HCT116 (cell line): ENCODE measurements at regions of chr2 and their contacts with region 1.

Region 1: GRCh38 chr2:219402665-219403515 is 15.2 kb upstream of the DNPEP start:
- DNase-seq: peak; percentile 79
- ATAC-seq: peak; percentile 91
- H3K4me3 ChIP-seq: no peak overlapping the region
- H3K27ac ChIP-seq: no peak overlapping the region; the same call in 1 of the 2 replicates
- H3K4me1 ChIP-seq: peaks cover 18 to 55% of the 10 kb centered on the region in 2 experiments
- H3K27me3 ChIP-seq: no peaks in the 10 kb centered on the region
- CTCF ChIP-seq: peak; percentile 91 to 98 (median 94)
- POLR2A ChIP-seq: no peak
- RAD21 ChIP-seq: peak; percentile 98

Region 2: GRCh38 chr2:218582076-218582475 is 820.8 kb before region 1 on chr2:
- CTCF ChIA-PET with region 1: no interaction called
- POLR2A ChIA-PET with region 1: no interaction called
- RAD21 ChIA-PET with region 1: no interaction called
- intact Hi-C with region 1: no loop called
- DNase-seq: no peak
- ATAC-seq: no peak
- H3K4me3 ChIP-seq: no peak overlapping the region
- H3K27ac ChIP-seq: no peak overlapping the region
- H3K4me1 ChIP-seq: no peaks in the 10 kb centered on the region
- H3K27me3 ChIP-seq: no peaks in the 10 kb centered on the region
- CTCF ChIP-seq: no peak
- POLR2A ChIP-seq: no peak
- RAD21 ChIP-seq: no peak

Region 3: DNA sequence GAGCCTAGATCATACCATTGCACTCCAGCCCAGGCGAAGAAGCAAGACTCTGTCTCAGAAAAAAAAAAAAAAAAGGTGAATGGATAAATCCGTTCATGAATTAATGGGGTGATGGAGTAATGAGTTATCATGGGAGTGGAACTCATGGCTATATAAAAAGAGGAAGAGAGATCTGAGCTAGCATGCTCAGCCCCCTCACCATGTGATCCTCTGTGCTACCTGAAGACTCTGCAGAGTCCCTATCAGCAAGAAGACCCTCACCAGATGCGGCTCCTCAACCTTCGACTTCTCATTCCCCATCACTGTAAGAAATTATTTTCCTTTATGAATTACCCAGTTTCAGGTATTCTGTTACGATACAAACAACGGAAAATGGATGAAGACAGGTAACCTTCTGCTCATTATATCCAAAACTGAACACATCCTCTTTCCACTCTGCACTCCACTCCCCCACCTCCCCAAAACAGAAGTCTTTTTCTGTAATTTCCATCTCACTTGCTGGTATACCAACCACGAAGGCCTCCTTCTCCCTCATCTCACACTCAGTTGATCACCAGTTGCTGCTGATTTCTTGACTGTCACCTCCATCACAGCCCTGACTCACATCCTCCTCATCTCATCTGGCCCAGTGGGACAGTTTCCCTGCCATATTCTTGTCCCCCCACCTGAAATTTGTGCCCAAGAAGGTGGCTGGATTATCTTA is 216.0 kb before region 1 on chr2:
- CTCF ChIA-PET with region 1: no interaction called
- POLR2A ChIA-PET with region 1: no interaction called
- RAD21 ChIA-PET with region 1: no interaction called
- intact Hi-C with region 1: no loop called
- DNase-seq: no peak
- ATAC-seq: no peak
- H3K4me3 ChIP-seq: no peak overlapping the region
- H3K27ac ChIP-seq: no peak overlapping the region
- H3K4me1 ChIP-seq: no peaks in the 10 kb centered on the region
- H3K27me3 ChIP-seq: no peaks in the 10 kb centered on the region
- CTCF ChIP-seq: no peak
- POLR2A ChIP-seq: no peak
- RAD21 ChIP-seq: no peak

Region 4: GRCh38 chr2:219388127-219388844 is 14.6 kb before region 1 on chr2:
- CTCF ChIA-PET with region 1: interaction called, 15 read pairs
- POLR2A ChIA-PET with region 1: interaction called, 4 read pairs
- RAD21 ChIA-PET with region 1: no interaction called
- intact Hi-C with region 1: no loop called
- DNase-seq: peak; percentile 90
- ATAC-seq: peak; percentile 78
- H3K4me3 ChIP-seq: peak overlapping the region; percentile 31 to 49
- H3K27ac ChIP-seq: peak overlapping the region; percentile 63
- H3K4me1 ChIP-seq: peaks cover 9 to 18% of the 10 kb centered on the region in 2 experiments; a peak in 3 of 4 replicates
- H3K27me3 ChIP-seq: no peaks in the 10 kb centered on the region
- CTCF ChIP-seq: peak; percentile 38 to 64 (median 60); a peak in 4 of 6 replicates
- POLR2A ChIP-seq: no peak
- RAD21 ChIP-seq: no peak

Region 5: DNA sequence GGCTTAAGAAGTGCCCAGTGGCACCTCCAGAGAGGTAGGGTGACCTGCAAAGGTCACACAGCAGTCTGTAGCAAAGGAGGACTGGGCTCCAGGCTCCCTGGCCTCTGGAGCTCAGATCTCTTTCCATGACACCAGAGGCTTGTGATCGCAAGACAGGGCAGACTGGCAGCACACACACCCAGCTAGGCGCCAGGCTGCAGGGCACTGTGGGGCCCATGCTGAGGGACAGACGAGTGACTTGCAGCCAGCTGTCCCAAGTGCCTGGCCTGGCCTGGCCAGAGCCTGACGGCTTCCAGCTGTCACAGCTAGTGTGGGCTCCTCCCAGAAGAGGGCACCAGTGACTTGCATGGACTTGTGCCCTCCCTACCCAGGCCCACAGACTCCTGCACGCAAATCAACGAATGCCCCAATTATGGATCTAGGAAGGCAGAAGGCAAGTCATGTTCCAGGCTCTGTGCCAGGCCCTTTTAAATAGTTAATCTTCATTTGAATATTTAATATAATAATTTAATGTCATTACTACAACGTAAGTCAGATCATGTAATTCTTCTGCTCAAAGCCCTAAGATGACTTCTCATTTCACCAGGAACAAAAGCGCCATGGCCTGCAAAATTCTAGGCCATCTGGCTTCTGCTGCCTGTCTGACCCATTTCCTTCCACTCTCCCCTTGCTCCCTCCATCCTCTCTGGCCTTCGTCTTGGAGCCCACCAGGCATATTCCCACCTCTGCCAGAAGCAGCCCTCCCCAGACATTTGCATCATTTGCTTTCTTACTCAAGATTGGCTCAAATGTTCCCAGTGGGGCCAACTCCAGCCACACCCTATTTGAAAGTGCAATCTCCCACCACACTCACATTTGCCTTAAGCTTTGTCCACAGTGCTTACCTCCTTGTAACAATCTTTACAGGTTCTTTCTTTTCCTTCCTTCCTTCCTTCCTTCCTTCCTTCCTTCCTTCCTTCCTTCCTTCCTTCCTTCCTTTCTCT is 28.0 kb after region 1 on chr2:
- CTCF ChIA-PET with region 1: interaction called, 8 read pairs
- POLR2A ChIA-PET with region 1: interaction called, 4 read pairs
- RAD21 ChIA-PET with region 1: no interaction called
- intact Hi-C with region 1: loop called (anchors 2 kb)
- DNase-seq: no peak
- ATAC-seq: peak; percentile 85
- H3K4me3 ChIP-seq: no peak overlapping the region
- H3K27ac ChIP-seq: no peak overlapping the region
- H3K4me1 ChIP-seq: peaks cover 6 to 32% of the 10 kb centered on the region in 2 experiments
- H3K27me3 ChIP-seq: no peaks in the 10 kb centered on the region
- CTCF ChIP-seq: peak; percentile 10 to 53 (median 29); a peak in 2 of 6 replicates
- POLR2A ChIP-seq: no peak
- RAD21 ChIP-seq: peak; percentile 72

Region 6: DNA sequence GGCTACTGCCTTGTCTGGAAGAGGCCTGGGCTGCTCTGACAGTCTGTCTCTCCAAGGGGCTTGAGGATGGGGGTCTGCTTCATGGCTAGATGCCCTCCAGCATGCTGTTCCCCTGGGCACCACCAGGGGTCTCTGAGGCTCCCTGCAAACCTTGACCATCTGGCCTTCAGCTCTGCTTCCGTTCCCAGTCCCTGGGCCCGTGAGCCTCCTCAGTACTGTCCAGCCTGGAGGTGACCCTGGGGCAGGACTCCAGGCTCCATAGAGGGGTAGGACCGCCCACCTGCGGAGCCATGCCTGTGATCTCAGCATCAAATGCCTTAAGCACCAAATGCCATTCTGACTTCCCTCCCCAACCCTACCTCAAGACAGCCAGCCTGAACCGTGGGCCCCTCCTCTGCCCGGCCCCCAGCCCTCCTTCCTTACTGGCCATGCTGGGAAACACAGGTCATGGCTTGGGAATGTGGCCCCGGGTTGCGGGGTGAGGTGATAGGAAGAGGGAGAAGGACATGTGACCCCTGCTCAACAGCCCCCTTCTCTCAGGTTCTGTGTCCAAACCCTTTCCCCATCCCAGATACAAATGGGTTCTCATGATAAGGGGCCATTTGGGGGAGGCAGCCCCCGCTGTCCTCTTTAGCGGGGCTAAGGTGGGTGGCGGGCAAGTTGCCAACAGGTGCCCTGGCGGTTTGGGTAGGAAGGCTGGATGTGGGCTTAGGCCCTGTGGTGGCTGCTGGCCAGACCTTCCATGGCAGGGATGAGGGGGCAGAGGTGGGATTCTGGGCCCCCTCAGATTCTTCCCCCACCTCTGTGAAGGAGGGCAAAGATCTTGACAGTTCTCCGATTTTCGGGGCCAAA is 56.8 kb after region 1 on chr2:
- CTCF ChIA-PET with region 1: interaction called, 4 read pairs
- POLR2A ChIA-PET with region 1: no interaction called
- RAD21 ChIA-PET with region 1: no interaction called
- intact Hi-C with region 1: loop called (anchors 2 kb)
- DNase-seq: no peak
- ATAC-seq: peak; percentile 85
- H3K4me3 ChIP-seq: no peak overlapping the region
- H3K27ac ChIP-seq: no peak overlapping the region
- H3K4me1 ChIP-seq: peaks cover 0 to 37% of the 10 kb centered on the region in 2 experiments; a peak in 2 of 4 replicates
- H3K27me3 ChIP-seq: no peaks in the 10 kb centered on the region
- CTCF ChIP-seq: peak in 2 of 3 experiments; percentile 90 to 91; a peak in 4 of 6 replicates
- POLR2A ChIP-seq: no peak
- RAD21 ChIP-seq: no peak

Region 7: DNA sequence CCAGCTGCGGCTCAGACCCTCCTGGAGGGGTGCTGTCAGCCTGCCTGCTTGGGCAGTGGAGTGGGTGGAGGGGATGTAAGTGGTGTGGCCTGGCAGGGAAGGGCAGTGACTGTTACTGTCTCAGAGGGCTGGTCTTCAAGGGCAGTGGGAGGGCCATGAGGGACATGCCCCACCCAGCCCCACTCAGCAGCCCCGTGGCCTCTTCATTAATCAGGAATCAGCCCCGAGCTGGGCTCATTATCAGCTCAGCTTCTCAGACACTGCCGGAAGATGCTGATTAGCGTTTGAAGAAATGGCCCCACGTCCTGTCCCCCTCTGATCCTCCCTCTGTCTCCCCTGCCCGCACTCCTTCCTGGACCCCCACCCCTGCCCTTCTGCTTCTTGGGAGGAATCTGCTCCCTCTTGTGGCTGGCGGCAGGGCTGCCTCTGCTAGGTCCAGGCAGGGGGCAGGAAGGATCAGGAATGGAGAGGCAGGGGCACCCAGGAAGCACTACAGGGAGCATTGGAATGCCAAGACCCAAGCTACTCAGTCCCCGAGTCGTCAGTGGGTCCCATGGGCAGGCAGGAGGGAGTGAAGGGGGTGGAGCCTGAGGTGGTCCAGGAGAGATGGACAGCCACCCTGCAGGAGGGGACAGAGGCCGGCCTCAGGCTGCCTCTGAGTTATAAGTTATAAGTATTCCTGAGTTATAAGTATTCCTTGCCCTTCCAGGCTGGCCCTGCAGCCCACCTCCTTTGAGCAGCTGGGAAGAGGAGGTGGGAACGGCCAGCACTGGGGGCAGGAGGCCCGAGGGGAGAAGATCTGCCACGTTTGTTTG is 118.4 kb after region 1 on chr2:
- CTCF ChIA-PET with region 1: interaction called, 109 read pairs
- POLR2A ChIA-PET with region 1: no interaction called
- RAD21 ChIA-PET with region 1: interaction called in 1 of 2 experiments, 8 read pairs
- intact Hi-C with region 1: no loop called
- DNase-seq: no peak
- ATAC-seq: peak; percentile 82
- H3K4me3 ChIP-seq: peak overlapping the region; percentile 21 to 49
- H3K27ac ChIP-seq: peak overlapping the region; percentile 78
- H3K4me1 ChIP-seq: peaks cover 36 to 73% of the 10 kb centered on the region in 2 experiments
- H3K27me3 ChIP-seq: no peaks in the 10 kb centered on the region
- CTCF ChIP-seq: peak in 2 of 3 experiments; percentile 82 to 85; a peak in 4 of 6 replicates
- POLR2A ChIP-seq: no peak
- RAD21 ChIP-seq: no peak

Region 8: DNA sequence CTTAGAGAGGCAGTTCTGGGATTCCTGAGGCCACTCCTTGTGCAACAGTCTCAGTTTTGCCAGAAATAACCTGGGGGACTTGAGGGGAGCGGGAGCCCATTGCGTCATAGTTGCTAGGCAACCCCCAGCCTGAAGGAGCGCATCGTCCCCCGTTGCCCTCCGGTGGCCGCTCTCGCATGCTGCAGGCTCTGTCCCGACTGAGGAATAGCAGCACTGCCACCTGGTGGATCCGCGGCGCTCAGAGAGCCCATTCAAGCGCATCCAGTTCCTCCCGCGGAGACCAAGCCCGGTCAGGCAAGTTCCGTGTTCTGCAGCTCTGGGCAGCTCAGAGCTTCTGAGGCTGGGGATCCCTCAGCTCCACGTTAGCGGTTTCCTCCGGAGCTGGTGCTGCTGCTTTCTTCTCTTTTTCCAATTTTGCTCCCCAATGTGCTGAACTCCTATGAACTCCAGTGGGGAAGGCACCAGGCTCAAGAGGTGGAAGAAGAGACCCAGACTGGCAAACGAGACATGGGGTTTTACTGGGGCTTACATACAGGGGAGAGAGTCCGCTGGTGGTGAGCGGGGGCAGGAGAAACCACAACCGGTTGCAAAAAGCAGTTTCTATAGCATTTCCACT is 239.7 kb after region 1 on chr2:
- CTCF ChIA-PET with region 1: no interaction called
- POLR2A ChIA-PET with region 1: no interaction called
- RAD21 ChIA-PET with region 1: no interaction called
- intact Hi-C with region 1: loop called (anchors 10 kb)
- DNase-seq: peak; percentile 88
- ATAC-seq: peak; percentile 78
- H3K4me3 ChIP-seq: no peak overlapping the region
- H3K27ac ChIP-seq: peak overlapping the region; percentile 47
- H3K4me1 ChIP-seq: peaks cover 24 to 56% of the 10 kb centered on the region in 2 experiments
- H3K27me3 ChIP-seq: no peaks in the 10 kb centered on the region
- CTCF ChIP-seq: peak; percentile 98 to 100 (median 99)
- POLR2A ChIP-seq: no peak
- RAD21 ChIP-seq: peak; percentile 97